Calu3 (cell line): ENCODE measurements at regions of chr11 and their contacts with region 1.

Region 1: GRCh38 chr11:93784152-93784934 is at the start of gene MED17:
- DNase-seq: peak; percentile 86
- H3K4me3 Mint-ChIP-seq: peak within 1 kb of the TSS; percentile 87
- H3K27ac Mint-ChIP-seq: peak within 1 kb of the TSS; percentile 76
- H3K4me1 Mint-ChIP-seq: peaks cover 17% of the 10 kb centered on the region
- H3K27me3 Mint-ChIP-seq: no peaks in the 10 kb centered on the region
- CTCF ChIP-seq: no peak
- total RNA-seq, gene MED17: 24.6 and 27.5 TPM in 2 replicates

Region 2: GRCh38 chr11:93741094-93741881 is 43.1 kb before region 1 on chr11 and contains the starts of genes C11orf54 and TAF1D:
- CTCF ChIA-PET with region 1: interaction called, 9 read pairs
- intact Hi-C with region 1: loop called (anchors 2 kb)
- DNase-seq: peak; percentile 92
- H3K4me3 Mint-ChIP-seq: peak within 1 kb of the TSS; percentile 96
- H3K27ac Mint-ChIP-seq: peak within 1 kb of the TSS; percentile 99
- H3K4me1 Mint-ChIP-seq: peaks cover 25% of the 10 kb centered on the region
- H3K27me3 Mint-ChIP-seq: no peaks in the 10 kb centered on the region
- CTCF ChIP-seq: no peak
- total RNA-seq, gene C11orf54: 14.7 and 17.1 TPM in 2 replicates
- total RNA-seq, gene TAF1D: 98.9 and 107 TPM in 2 replicates